ENCODE measurements at regions of chr15 and their contacts with region 1.

Region 1: GRCh38 chr15:68252925-68253534 is 23.5 kb upstream of the CLN6 start:
- DNase-seq: peak; percentile 89
- H3K4me3 Mint-ChIP-seq: no peak overlapping the region
- H3K27ac Mint-ChIP-seq: no peak overlapping the region
- H3K4me1 Mint-ChIP-seq: no peaks in the 10 kb centered on the region
- H3K27me3 Mint-ChIP-seq: no peaks in the 10 kb centered on the region
- CTCF ChIP-seq: peak; percentile 68

Region 2: GRCh38 chr15:68154923-68155559 is 98.0 kb before region 1 on chr15:
- CTCF ChIA-PET with region 1: no interaction called
- POLR2A ChIA-PET with region 1: no interaction called
- intact Hi-C with region 1: no loop called
- DNase-seq: peak; percentile 71
- H3K4me3 Mint-ChIP-seq: no peak overlapping the region
- H3K27ac Mint-ChIP-seq: no peak overlapping the region
- H3K4me1 Mint-ChIP-seq: peaks cover 20% of the 10 kb centered on the region
- H3K27me3 Mint-ChIP-seq: no peaks in the 10 kb centered on the region
- CTCF ChIP-seq: peak; percentile 79

Region 3: DNA sequence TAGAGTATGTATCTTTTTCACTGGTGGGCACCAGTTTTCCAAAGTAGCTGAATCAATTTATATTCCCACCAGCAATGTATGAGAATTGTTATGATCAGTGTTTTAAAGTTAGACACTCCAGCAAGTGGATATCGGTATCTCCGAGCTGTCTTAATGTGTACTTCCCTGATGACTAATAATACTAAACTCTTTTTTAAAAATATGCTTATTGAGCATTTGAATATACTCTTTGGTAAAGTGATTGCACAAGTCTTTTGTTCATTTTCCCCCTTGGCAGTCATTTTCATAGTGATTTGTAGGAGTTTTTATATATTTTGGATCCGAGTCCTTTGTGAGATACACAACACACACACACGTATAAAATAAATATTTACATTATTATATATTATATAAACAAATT is 12.1 kb after region 1 on chr15:
- CTCF ChIA-PET with region 1: interaction called, 7 read pairs
- POLR2A ChIA-PET with region 1: interaction called, 391 read pairs
- intact Hi-C with region 1: no loop called
- DNase-seq: no peak
- H3K4me3 Mint-ChIP-seq: no peak overlapping the region
- H3K27ac Mint-ChIP-seq: no peak overlapping the region
- H3K4me1 Mint-ChIP-seq: peaks cover 13% of the 10 kb centered on the region
- H3K27me3 Mint-ChIP-seq: no peaks in the 10 kb centered on the region
- CTCF ChIP-seq: no peak

Region 4: GRCh38 chr15:68277603-68278344 is 24.7 kb after region 1 on chr15 and contains the start of gene FEM1B:
- CTCF ChIA-PET with region 1: interaction called, 16 read pairs
- POLR2A ChIA-PET with region 1: interaction called, 391 read pairs
- intact Hi-C with region 1: loop called (anchors 1 kb)
- DNase-seq: peak; percentile 92
- H3K4me3 Mint-ChIP-seq: peak within 1 kb of the TSS; percentile 85
- H3K27ac Mint-ChIP-seq: peak within 1 kb of the TSS; percentile 99
- H3K4me1 Mint-ChIP-seq: peaks cover 55% of the 10 kb centered on the region
- H3K27me3 Mint-ChIP-seq: no peaks in the 10 kb centered on the region
- CTCF ChIP-seq: no peak
- total RNA-seq, gene FEM1B: 50.7 and 70.2 TPM in 2 replicates

Region 5: DNA sequence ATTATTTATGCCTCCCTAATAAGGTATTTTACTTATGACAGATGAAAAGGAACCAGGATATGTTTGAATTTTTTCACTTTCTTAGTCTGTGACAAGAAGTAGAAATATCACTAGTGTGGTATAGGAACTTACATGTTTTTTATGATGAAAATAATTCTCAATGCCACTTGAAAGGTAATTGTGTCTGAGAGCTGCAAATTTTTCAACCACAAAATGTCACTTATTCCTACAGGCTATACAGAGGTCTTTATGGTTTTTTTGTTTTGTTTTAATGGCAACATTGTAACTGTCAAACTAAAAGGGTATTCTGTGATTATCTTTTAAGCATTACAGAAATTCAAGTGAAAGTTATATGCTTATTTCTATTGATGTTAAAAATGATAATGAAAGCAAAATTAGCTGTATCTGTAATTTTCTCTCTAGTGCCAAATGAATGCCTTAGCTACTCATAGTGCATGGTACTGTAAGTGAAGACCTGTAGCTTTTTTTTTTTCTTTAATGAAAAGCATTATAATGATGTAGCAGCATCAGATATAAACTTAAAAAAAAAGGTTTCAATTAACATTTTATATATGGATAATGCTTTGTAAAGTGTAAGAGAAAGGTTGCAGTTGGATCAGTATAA is 39.2 kb after region 1 on chr15:
- CTCF ChIA-PET with region 1: interaction called, 26 read pairs
- POLR2A ChIA-PET with region 1: interaction called, 14 read pairs
- intact Hi-C with region 1: loop called (anchors 5 kb)
- DNase-seq: no peak
- H3K4me3 Mint-ChIP-seq: no peak overlapping the region
- H3K27ac Mint-ChIP-seq: no peak overlapping the region
- H3K4me1 Mint-ChIP-seq: peaks cover 38% of the 10 kb centered on the region
- H3K27me3 Mint-ChIP-seq: no peaks in the 10 kb centered on the region
- CTCF ChIP-seq: no peak

Region 6: GRCh38 chr15:68298882-68299381 is 45.9 kb after region 1 on chr15:
- CTCF ChIA-PET with region 1: interaction called, 97 read pairs
- POLR2A ChIA-PET with region 1: interaction called, 39 read pairs
- intact Hi-C with region 1: loop called (anchors 5 kb)
- DNase-seq: no peak
- H3K4me3 Mint-ChIP-seq: no peak overlapping the region
- H3K27ac Mint-ChIP-seq: no peak overlapping the region
- H3K4me1 Mint-ChIP-seq: peaks cover 14% of the 10 kb centered on the region
- H3K27me3 Mint-ChIP-seq: no peaks in the 10 kb centered on the region
- CTCF ChIP-seq: no peak

Region 7: GRCh38 chr15:68383161-68384074 is 130.4 kb after region 1 on chr15:
- CTCF ChIA-PET with region 1: interaction called, 7 read pairs
- POLR2A ChIA-PET with region 1: no interaction called
- intact Hi-C with region 1: loop called (anchors 1 kb)
- DNase-seq: peak; percentile 70
- H3K4me3 Mint-ChIP-seq: no peak overlapping the region
- H3K27ac Mint-ChIP-seq: no peak overlapping the region
- H3K4me1 Mint-ChIP-seq: peaks cover 11% of the 10 kb centered on the region
- H3K27me3 Mint-ChIP-seq: no peaks in the 10 kb centered on the region
- CTCF ChIP-seq: peak; percentile 54

Region 8: DNA sequence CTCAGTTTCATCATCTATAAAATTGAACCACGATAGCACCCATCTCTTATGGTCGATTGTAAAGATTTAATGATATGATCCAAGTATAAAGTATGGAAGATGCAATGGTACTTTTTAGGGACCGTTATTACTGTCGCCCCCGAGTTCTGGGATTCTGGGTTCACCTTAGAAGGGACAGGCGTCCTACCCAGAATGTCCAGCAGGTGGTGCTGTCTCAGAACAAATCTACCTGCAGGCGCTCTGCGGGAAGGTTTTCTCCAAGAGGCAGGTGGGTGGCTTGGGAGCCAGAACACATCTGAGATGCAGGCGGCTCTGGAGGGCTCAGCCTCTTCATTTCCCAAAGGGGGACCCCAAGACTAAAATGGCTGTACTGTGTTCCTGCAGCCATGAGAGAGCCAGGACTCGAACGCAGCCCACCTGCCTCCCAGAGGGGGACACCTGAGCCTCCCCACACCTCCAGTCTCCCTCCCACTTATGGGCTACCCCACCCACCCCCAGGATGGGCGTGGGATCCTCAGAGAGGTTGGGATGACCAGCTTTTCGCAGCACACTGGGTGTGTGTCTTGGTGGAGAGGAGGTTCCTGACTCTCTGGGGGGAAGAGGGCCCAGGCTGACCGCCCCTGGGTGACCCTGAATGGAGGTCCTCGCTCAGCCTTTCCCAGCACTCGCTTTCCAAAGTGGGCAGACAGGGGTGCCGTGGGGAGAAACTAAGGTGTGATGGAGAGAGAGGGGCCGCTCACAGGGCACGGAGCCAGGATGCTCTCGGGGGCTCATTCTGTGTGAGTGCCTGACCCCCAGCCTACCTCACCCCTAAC is 297.7 kb after region 1 on chr15:
- CTCF ChIA-PET with region 1: interaction called, 18 read pairs
- POLR2A ChIA-PET with region 1: no interaction called
- intact Hi-C with region 1: loop called (anchors 1 kb)
- DNase-seq: peak; percentile 72
- H3K4me3 Mint-ChIP-seq: no peak overlapping the region
- H3K27ac Mint-ChIP-seq: no peak overlapping the region
- H3K4me1 Mint-ChIP-seq: no peaks in the 10 kb centered on the region
- H3K27me3 Mint-ChIP-seq: peaks cover 20% of the 10 kb centered on the region
- CTCF ChIP-seq: peak; percentile 84

Measured in MCF 10A (cell line).